ENCODE measurements at regions of chr9 and their contacts with region 1.

Region 1: GRCh38 chr9:113578882-113579282 is 115.4 kb downstream of the RGS3 start:
- DNase-seq: peak; percentile 88
- ATAC-seq: peak; percentile 72
- H3K4me3 ChIP-seq: 0 out of 2 replicates have a peak overlapping the region, but pooled peaks have one; percentile 16
- H3K27ac ChIP-seq: peak overlapping the region; percentile 70
- H3K4me1 ChIP-seq: peaks cover 91% of the 10 kb centered on the region
- H3K27me3 ChIP-seq: no peaks in the 10 kb centered on the region
- CTCF ChIP-seq: no peak
- EP300 ChIP-seq: peak; percentile 80 to 85; a peak in 3 of 4 replicates
- POLR2A ChIP-seq: peak; percentile 60
- RAD21 ChIP-seq: no peak; the same call in 1 of the 2 replicates

Region 2: DNA sequence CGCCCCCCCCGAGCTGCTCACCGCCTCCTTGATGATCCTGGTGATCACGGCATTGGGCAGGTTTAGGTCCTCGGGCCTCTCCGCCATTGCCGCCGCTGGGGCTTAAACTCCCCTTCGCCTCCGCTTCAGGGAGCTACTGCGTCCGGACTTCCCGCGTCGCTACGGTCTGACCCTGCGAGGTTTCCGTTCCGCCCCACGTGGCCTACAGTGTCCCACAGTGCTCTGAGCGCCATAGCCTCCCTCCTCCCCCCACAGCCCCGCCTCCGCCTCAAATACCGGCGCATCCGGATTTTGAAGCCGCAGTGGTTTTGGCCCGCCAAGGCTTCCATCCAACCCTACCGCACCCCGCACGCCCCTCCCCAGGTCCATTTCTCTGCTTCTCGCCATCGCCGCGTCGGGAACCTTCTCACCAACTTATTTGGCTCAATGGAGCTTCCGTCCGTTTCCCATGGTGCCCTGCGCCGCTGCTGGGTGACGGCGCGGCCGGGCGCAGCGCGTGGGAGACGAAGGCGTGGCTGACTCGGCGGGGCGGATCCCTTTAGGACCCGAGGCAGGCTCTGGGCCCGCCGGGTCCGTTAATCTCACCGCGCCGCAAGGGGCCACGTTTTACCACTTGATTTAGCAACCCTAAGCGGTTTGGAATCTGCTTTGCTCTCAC is 168.5 kb before region 1 on chr9 and contains the starts of genes C9orf43 and POLE3:
- CTCF ChIA-PET with region 1: interaction called, 3 read pairs
- POLR2A ChIA-PET with region 1: interaction called, 5 read pairs
- RAD21 ChIA-PET with region 1: interaction called, 16 read pairs
- SMC1A ChIA-PET with region 1: interaction called, 4 read pairs
- in situ Hi-C with region 1: no loop called
- intact Hi-C with region 1: no loop called
- DNase-seq: peak; percentile 80
- ATAC-seq: peak; percentile 96
- H3K4me3 ChIP-seq: peak within 1 kb of the TSS; percentile 92
- H3K27ac ChIP-seq: peak within 1 kb of the TSS; percentile 98
- H3K4me1 ChIP-seq: peaks cover 16% of the 10 kb centered on the region; the same call in 1 of the 2 replicates
- H3K27me3 ChIP-seq: no peaks in the 10 kb centered on the region
- CTCF ChIP-seq: no peak; a peak in 1 of 6 replicates
- EP300 ChIP-seq: 0 out of 4 replicates have a peak, but pooled peaks of 1 of the 2 experiments have one; percentile 15
- POLR2A ChIP-seq: peak; percentile 90
- RAD21 ChIP-seq: no peak
- polyA plus RNA-seq, gene C9orf43: 0.23 to 0.51 TPM
- polyA plus RNA-seq, gene POLE3: 40.8 to 65.9 TPM

Region 3: GRCh38 chr9:113454914-113455761 is 123.7 kb before region 1 on chr9:
- CTCF ChIA-PET with region 1: interaction called, 306 read pairs
- POLR2A ChIA-PET with region 1: no interaction called
- RAD21 ChIA-PET with region 1: interaction called, 11 read pairs
- SMC1A ChIA-PET with region 1: interaction called, 93 read pairs
- in situ Hi-C with region 1: no loop called
- intact Hi-C with region 1: no loop called
- DNase-seq: no peak
- ATAC-seq: peak; percentile 71
- H3K4me3 ChIP-seq: no peak overlapping the region
- H3K27ac ChIP-seq: no peak overlapping the region
- H3K4me1 ChIP-seq: peaks cover 9% of the 10 kb centered on the region
- H3K27me3 ChIP-seq: no peaks in the 10 kb centered on the region
- CTCF ChIP-seq: no peak
- EP300 ChIP-seq: no peak
- POLR2A ChIP-seq: no peak
- RAD21 ChIP-seq: no peak

Region 4: DNA sequence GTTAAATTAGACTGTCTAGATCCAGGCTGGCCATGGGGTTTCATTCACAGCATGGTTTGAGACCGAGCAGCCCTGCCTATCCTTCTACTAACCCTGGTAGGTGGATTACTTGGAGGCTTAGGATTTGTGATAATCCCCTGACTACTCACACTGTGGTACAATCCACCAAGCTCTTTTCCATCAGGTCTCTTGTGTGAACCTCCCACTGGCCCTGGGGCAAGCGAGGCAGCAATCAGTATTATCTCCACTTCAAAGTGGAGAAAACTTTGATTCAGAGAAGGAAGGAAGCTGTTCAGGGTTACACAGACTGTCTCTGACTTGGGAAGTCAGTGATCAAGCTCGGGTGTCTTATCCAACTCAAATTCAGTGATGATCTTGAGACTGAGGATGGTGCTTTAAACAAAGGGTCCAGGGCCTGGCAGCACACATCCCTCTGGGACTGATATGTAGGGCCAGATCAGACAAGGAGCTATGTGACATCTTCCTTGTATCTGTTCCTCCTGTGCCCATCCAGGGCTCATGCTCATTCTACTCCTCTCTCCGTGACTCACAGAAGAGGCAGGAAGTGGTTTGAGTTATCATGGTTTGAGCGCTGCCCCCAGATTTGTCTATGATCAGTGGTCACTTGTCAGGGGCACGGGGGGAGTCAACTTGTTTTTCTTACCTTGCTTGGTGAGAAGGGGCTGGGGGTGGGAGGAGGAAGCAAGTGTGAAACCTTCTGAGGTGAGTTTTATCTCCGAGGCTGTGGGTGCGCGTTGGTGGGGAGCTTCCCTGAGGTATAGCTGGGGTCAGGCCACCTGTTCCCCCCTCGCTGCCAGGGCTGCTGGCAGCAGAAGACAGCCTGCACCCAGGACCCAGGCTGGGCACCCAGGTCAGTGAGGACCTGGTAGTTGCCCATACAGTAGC is 66.8 kb before region 1 on chr9:
- CTCF ChIA-PET with region 1: interaction called, 199 read pairs
- POLR2A ChIA-PET with region 1: interaction called, 233 read pairs
- RAD21 ChIA-PET with region 1: interaction called, 481 read pairs
- SMC1A ChIA-PET with region 1: interaction called, 323 read pairs
- in situ Hi-C with region 1: no loop called
- intact Hi-C with region 1: loop called (anchors 1 kb)
- DNase-seq: peak; percentile 81
- ATAC-seq: peak; percentile 74
- H3K4me3 ChIP-seq: peak overlapping the region; percentile 42; the same call in 1 of the 2 replicates
- H3K27ac ChIP-seq: peak overlapping the region; percentile 68
- H3K4me1 ChIP-seq: peaks cover 41% of the 10 kb centered on the region
- H3K27me3 ChIP-seq: no peaks in the 10 kb centered on the region
- CTCF ChIP-seq: no peak
- EP300 ChIP-seq: peak; percentile 7 to 84; a peak in 2 of 4 replicates
- POLR2A ChIP-seq: no peak
- RAD21 ChIP-seq: no peak

Region 5: DNA sequence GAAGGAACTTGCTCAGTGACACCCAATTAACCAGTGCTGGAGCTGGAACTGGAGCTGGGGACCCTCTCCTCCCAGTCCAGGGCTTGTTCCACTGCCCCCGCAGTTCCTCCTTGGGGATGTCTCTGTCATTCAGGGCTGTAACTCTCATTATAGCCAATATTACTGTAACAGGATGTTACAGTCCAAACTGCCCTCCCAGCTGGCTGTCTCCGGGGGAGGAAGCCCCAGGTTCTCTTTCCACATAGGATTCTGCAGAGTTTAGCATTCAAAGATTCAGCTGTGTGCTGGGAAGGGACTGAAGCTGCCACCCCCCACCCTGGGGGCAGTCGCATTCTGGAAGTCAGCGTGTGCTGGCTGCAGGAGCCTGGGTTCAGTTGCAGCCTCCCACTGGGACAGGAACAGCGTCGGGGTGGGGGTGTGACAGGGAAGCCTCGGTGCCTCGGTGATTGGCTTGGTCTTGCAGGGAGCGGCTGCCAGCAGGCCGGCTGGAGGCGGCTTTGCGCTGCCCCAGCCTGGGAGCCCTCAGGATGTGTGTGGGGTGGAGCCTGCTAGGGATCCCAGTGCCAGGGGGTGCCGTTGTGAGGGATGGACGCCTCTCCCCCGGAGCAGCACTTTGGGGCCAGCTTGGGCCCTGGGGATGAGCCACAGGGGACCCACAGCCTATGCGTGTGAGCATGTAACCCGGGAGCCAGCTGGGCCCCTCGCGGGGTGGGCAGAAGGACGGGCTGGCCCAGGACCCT is 14.2 kb before region 1 on chr9:
- CTCF ChIA-PET with region 1: interaction called, 35 read pairs
- POLR2A ChIA-PET with region 1: interaction called, 62 read pairs
- RAD21 ChIA-PET with region 1: interaction called, 36 read pairs
- SMC1A ChIA-PET with region 1: interaction called, 37 read pairs
- in situ Hi-C with region 1: no loop called
- intact Hi-C with region 1: loop called (anchors 1 kb)
- DNase-seq: no peak
- ATAC-seq: peak; percentile 6
- H3K4me3 ChIP-seq: no peak overlapping the region
- H3K27ac ChIP-seq: no peak overlapping the region
- H3K4me1 ChIP-seq: peaks cover 17% of the 10 kb centered on the region
- H3K27me3 ChIP-seq: no peaks in the 10 kb centered on the region
- CTCF ChIP-seq: no peak
- EP300 ChIP-seq: no peak
- POLR2A ChIP-seq: no peak
- RAD21 ChIP-seq: no peak

Measured in GM12878 (cell line).